ENCODE measurements at regions of chr5 and their contacts with region 1.

Region 1: DNA sequence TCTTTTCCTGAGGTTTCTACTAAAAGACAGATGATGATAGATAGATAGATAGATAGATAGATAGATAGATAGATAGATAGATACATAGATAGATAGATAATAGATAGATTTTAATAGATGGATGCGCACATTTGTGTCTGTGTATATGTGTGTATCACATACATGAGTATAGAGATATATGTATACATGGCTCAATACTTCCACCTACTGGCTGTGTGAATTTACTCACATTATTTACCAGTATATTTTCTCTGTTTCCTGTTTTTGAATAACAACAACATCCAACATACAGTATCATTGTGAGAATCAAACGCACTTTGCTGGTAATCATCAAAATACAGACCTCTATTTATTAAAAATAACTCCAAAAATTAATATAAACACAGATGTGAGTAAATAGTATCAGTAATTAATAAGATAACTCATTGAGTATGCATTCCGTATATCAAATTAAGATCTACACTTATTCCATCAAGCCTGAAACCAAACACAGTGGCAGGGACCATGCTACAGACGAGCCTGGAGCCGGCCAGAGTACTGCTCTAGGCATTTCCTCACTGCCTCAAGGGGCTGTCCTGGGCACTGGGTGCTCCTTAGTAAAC is 338.0 kb downstream of the SEMA5A start:
- DNase-seq: peak; percentile 67
- H3K4me3 ChIP-seq: no peak overlapping the region
- H3K27ac ChIP-seq: no peak overlapping the region
- H3K4me1 ChIP-seq: no peaks in the 10 kb centered on the region
- CTCF ChIP-seq: peak; percentile 86

Region 2: GRCh38 chr5:7927466-7928375 is 1280.2 kb before region 1 on chr5:
- CTCF ChIA-PET with region 1: no interaction called
- POLR2A ChIA-PET with region 1: no interaction called
- intact Hi-C with region 1: loop called (anchors 5 kb)
- DNase-seq: peak; percentile 55
- H3K4me3 ChIP-seq: no peak overlapping the region
- H3K27ac ChIP-seq: no peak overlapping the region
- H3K4me1 ChIP-seq: no peaks in the 10 kb centered on the region
- CTCF ChIP-seq: peak; percentile 83

Region 3: GRCh38 chr5:8756498-8757084 is 451.3 kb before region 1 on chr5:
- CTCF ChIA-PET with region 1: no interaction called
- POLR2A ChIA-PET with region 1: no interaction called
- intact Hi-C with region 1: loop called (anchors 5 kb)
- DNase-seq: peak; percentile 45
- H3K4me3 ChIP-seq: no peak overlapping the region
- H3K27ac ChIP-seq: no peak overlapping the region
- H3K4me1 ChIP-seq: no peaks in the 10 kb centered on the region
- CTCF ChIP-seq: peak; percentile 72

Region 4: DNA sequence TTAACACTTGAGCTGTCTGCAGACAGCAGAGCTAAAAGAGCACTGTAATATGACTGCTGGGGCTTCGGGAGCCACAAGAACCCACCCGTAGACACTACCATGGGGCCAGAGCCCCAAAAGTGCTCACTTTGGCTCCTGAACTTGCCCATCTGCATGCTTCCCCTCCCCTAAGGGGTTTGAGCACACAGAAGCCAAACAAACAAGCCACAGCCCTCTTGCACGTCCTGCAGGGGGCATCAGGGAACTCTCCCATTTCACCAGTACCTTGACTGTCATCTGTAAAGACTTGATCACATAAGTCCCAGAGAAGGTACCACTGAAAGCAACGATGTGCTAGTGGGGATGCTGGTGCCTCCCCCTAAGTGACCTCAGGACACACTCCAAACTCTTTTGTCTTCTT is 343.9 kb before region 1 on chr5:
- CTCF ChIA-PET with region 1: no interaction called
- POLR2A ChIA-PET with region 1: no interaction called
- intact Hi-C with region 1: loop called (anchors 2 kb)
- DNase-seq: peak; percentile 47
- H3K4me3 ChIP-seq: no peak overlapping the region
- H3K27ac ChIP-seq: no peak overlapping the region
- H3K4me1 ChIP-seq: no peaks in the 10 kb centered on the region
- CTCF ChIP-seq: peak; percentile 71

Measured in OCI-LY7 (cell line).